Dendritic cell treated with granulocyte-macrophage colony-stimulating factor and Interleukin-4, amounts not matched to agents 40 ng/mL and 50 ng/mL, for 4 days (primary cell): ENCODE measurements at regions of chr10 and their contacts with region 1.

Region 1: DNA sequence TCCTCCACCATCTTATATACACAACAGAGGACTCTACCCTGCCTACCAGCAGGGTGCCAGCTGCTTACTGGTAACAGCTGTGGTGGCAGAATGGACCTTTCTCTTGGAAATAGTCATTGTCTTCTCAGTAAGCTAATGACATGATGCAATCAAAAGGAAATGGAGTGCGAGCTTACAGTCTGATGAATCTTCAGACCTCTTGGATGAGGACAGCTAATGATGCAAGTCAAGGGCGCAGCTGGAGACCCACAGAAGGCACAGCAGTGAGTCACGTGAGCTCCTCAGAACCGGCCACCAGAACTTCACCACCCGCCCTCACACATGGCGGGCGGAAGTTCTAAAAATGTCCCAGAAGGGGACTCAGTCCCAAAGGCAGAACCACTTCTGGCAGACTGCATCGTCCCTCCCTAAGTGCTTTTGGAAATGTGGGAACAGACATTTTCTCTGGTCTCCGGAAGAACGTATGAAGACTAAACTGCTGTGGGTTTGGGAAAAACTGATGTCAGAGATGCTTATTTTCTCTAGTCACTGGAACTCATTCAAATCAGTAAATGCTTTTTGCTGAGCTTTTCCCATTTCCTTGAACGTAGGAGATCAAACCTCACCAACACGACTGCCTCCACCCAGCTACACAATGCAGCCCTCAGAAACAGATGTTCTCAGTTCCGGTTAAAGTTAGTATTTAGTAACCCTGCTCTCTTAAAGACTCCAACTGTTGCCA is 96.4 kb downstream of the FAS start:
- H3K4me3 Mint-ChIP-seq: no peak overlapping the region
- H3K27ac Mint-ChIP-seq: no peak overlapping the region
- H3K4me1 Mint-ChIP-seq: peaks cover 27% of the 10 kb centered on the region
- H3K27me3 Mint-ChIP-seq: no peaks in the 10 kb centered on the region

Region 2: GRCh38 chr10:88990384-88991160 is 96.4 kb before region 1 on chr10 and contains the start of gene FAS:
- intact Hi-C with region 1: loop called (anchors 5 kb)
- H3K4me3 Mint-ChIP-seq: peak within 1 kb of the TSS; percentile 99
- H3K27ac Mint-ChIP-seq: peak within 1 kb of the TSS; percentile 95
- H3K4me1 Mint-ChIP-seq: peaks cover 32% of the 10 kb centered on the region
- H3K27me3 Mint-ChIP-seq: peaks cover 2% of the 10 kb centered on the region

Region 3: GRCh38 chr10:89122433-89123051 is 35.6 kb after region 1 on chr10:
- intact Hi-C with region 1: loop called (anchors 1 kb)
- H3K4me3 Mint-ChIP-seq: no peak overlapping the region
- H3K27ac Mint-ChIP-seq: peak overlapping the region; percentile 93
- H3K4me1 Mint-ChIP-seq: peaks cover 53% of the 10 kb centered on the region
- H3K27me3 Mint-ChIP-seq: peaks cover 5% of the 10 kb centered on the region

Region 4: DNA sequence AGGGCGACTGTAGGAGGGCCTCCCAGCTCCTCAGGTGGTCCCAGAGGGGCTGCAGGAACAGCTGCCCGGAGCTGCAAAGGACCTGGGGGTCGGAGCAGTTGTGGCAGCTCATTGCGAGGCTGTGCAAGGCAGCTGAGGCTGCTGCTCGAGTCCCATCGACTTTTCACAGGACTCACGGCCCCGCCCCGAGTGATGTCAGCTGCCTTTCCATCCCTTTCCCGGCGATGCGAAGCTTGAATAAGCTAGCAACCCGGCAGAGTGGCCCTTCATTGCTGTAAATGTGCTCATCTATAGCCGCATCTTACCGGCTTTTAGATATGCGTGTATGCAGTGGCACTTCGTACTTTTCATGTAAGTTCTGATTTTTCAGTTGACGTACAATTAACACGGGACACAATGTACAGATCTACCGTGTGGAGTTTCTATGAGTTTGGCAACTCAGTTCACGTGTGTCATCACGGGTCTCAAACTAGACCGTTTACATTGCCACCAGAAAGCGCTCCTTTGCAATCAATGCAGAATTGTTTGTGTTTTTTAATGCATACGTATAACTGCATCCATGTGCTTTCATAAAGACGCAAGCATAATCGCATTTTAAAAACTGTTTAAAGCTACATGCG is 120.3 kb after region 1 on chr10 and contains the start of gene CH25H:
- intact Hi-C with region 1: loop called (anchors 2 kb)
- H3K4me3 Mint-ChIP-seq: peak within 1 kb of the TSS; percentile 79
- H3K27ac Mint-ChIP-seq: peak within 1 kb of the TSS; percentile 80
- H3K4me1 Mint-ChIP-seq: peaks cover 30% of the 10 kb centered on the region
- H3K27me3 Mint-ChIP-seq: peaks cover 48% of the 10 kb centered on the region

Region 5: DNA sequence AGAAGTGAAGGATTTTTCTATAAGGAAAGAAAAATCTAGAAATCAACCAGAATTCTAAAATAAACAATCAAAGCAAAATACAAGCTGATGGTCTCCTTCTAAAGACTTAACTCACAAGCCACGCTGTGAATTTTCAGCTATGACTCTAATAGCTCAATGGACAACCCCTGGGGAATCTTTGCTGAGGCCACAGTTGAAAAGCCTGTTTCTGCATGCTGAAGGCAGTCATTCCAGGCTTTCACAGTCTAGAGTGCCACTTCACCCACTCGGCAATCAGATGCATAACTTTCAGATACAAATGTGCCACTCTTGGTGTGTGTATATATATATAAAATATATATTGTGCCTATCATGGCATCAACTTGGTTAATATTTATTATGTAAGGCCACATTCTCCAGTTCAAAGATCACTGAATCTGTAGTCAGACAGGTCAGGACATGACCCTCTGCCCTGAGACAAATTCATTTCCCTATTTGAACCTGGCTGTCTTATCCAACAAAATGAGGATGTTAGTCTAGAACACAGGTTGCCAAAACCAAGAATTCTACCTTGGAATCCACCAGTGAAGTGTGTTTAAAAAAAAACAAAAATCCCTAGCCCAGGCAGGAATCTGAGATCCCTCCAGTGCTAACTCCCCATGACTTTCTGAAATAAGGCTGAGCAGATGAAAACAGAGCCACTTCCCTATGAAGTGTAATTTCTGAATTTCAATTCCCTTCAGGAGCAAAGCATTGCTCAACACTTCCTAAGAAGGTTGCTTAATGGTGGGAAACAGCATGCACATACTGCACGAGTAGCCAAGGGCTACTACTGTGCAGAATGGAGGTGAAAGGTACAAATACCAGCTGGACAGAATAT is 154.8 kb after region 1 on chr10:
- intact Hi-C with region 1: no loop called
- H3K4me3 Mint-ChIP-seq: peak overlapping the region; percentile 42
- H3K27ac Mint-ChIP-seq: peak overlapping the region; percentile 79
- H3K4me1 Mint-ChIP-seq: peaks cover 71% of the 10 kb centered on the region
- H3K27me3 Mint-ChIP-seq: no peaks in the 10 kb centered on the region